ENCODE measurements at regions of chr1 and their contacts with region 1.

Region 1: DNA sequence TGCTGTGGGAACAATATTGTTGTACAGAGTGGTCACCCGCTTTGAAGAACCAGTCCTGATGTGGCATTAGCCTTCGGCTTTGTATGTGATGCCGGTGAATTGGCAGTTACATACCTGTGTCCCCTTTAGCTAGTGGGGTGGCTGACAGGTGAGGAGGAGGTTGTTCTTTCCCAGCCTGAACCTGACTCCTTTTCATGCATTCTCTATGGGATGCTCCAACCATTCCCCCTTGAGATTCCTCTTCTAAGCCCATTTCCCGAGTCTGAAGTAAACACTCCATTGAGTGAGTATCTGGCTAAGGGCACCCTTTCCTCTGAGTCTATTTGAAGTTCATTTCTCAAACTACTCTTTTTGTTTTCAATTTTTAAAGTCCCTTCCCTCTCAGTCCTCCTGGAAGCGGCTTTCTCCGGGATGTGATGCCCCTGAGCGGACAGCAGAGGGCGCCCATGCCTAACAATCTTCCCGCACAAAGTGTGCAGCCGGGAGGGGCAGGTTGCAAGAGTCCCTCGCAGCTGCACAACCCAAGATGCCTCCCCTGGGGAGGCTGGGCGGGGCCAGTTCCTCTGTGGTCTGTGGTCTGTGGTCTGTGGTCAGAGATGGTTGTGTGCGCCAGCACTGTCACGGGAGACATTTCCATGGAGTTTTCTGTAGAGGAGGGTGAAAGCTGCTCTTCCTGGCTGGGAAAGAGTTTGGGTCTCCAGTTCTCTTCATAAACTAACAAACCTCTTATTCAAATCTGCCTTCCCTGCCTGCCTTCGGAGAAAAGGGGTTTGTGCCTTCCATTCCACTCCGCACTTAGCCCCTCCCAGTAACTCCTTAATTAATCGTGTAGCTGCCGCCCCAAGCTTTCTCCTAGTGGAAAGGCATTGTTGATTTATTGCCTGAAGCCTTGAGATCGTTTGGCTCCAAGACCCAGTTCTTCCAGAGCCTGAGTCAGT is 36.4 kb upstream of the LMX1A start:
- DNase-seq: peak; percentile 83
- H3K4me3 ChIP-seq: peak overlapping the region; percentile 36
- H3K27ac ChIP-seq: peak overlapping the region; percentile 21
- H3K4me1 ChIP-seq: peaks cover 16% of the 10 kb centered on the region
- H3K27me3 ChIP-seq: peaks cover 26% of the 10 kb centered on the region
- CTCF ChIP-seq: peak; percentile 96

Region 2: GRCh38 chr1:165549973-165550372 is 157.1 kb after region 1 on chr1:
- intact Hi-C with region 1: no loop called
- DNase-seq: no peak
- H3K4me3 ChIP-seq: no peak overlapping the region
- H3K27ac ChIP-seq: no peak overlapping the region
- H3K4me1 ChIP-seq: peaks cover 7% of the 10 kb centered on the region
- H3K27me3 ChIP-seq: peaks cover 17% of the 10 kb centered on the region
- CTCF ChIP-seq: no peak

Region 3: GRCh38 chr1:165592945-165593823 is 200.3 kb after region 1 on chr1:
- intact Hi-C with region 1: loop called (anchors 2 kb)
- DNase-seq: peak; percentile 22
- H3K4me3 ChIP-seq: no peak overlapping the region
- H3K27ac ChIP-seq: no peak overlapping the region
- H3K4me1 ChIP-seq: peaks cover 7% of the 10 kb centered on the region
- H3K27me3 ChIP-seq: peaks cover 31% of the 10 kb centered on the region
- CTCF ChIP-seq: peak; percentile 95

Region 4: GRCh38 chr1:165914136-165914798 is 521.4 kb after region 1 on chr1:
- intact Hi-C with region 1: loop called (anchors 10 kb)
- DNase-seq: no peak
- H3K4me3 ChIP-seq: no peak overlapping the region
- H3K27ac ChIP-seq: no peak overlapping the region
- H3K4me1 ChIP-seq: peaks cover 19% of the 10 kb centered on the region
- H3K27me3 ChIP-seq: no peaks in the 10 kb centered on the region
- CTCF ChIP-seq: peak; percentile 91

Measured in left ventricle myocardium inferior (tissue), 1 donor.